Breast epithelium (tissue), 4 donors: ENCODE measurements at regions of chr7 and their contacts with region 1.

Region 1: GRCh38 chr7:132206594-132206993 is 369.7 kb downstream of the PLXNA4 start:
- DNase-seq: no peak
- H3K4me3 ChIP-seq: no peak overlapping the region
- H3K27ac ChIP-seq: no peak overlapping the region
- H3K4me1 ChIP-seq: no peaks in the 10 kb centered on the region
- H3K27me3 ChIP-seq: no peaks in the 10 kb centered on the region
- CTCF ChIP-seq: no peak
- POLR2A ChIP-seq: no peak

Region 2: DNA sequence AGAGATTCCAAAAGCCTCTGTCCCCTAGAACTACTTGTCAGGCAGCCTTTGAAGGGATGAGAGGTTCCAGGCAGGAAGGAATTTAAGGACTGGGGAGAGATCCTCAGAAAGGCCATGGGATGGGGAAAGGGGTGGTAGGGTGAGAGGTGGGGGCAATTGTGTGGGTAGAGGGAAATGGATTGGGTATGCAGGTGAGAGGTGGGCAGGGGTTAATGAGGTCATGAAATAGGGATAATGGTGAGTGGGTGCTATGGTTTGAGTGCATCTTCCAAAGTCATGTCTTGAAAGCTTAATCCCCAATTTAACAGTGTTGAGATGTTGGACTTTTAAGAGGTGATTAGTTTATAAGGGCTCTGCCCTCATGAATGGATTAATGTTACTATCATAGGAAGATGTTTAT is 13.8 kb before region 1 on chr7:
- intact Hi-C with region 1: loop called (anchors 1 kb)
- DNase-seq: no peak
- H3K4me3 ChIP-seq: no peak overlapping the region
- H3K27ac ChIP-seq: no peak overlapping the region
- H3K4me1 ChIP-seq: no peaks in the 10 kb centered on the region
- H3K27me3 ChIP-seq: no peaks in the 10 kb centered on the region
- CTCF ChIP-seq: no peak
- POLR2A ChIP-seq: no peak

Region 3: GRCh38 chr7:132368246-132368900 is 161.8 kb after region 1 on chr7:
- intact Hi-C with region 1: no loop called
- DNase-seq: no peak
- H3K4me3 ChIP-seq: no peak overlapping the region
- H3K27ac ChIP-seq: no peak overlapping the region
- H3K4me1 ChIP-seq: no peaks in the 10 kb centered on the region
- H3K27me3 ChIP-seq: no peaks in the 10 kb centered on the region
- CTCF ChIP-seq: no peak
- POLR2A ChIP-seq: no peak